ENCODE measurements at regions of chr5 and their contacts with region 1.

Region 1: GRCh38 chr5:102271759-102272158 is 24.3 kb downstream of the SLCO4C1 start:
- DNase-seq: no peak
- ATAC-seq: no peak
- H3K4me3 ChIP-seq: no peak overlapping the region
- H3K27ac ChIP-seq: no peak overlapping the region
- H3K4me1 ChIP-seq: no peaks in the 10 kb centered on the region
- H3K27me3 ChIP-seq: no peaks in the 10 kb centered on the region
- CTCF ChIP-seq: no peak
- POLR2A ChIP-seq: no peak

Region 2: GRCh38 chr5:102286476-102286875 is 14.7 kb after region 1 on chr5:
- in situ Hi-C with region 1: no loop called
- intact Hi-C with region 1: loop called (anchors 2 kb)
- DNase-seq: no peak
- ATAC-seq: no peak
- H3K4me3 ChIP-seq: no peak overlapping the region
- H3K27ac ChIP-seq: no peak overlapping the region
- H3K4me1 ChIP-seq: no peaks in the 10 kb centered on the region
- H3K27me3 ChIP-seq: no peaks in the 10 kb centered on the region
- CTCF ChIP-seq: no peak
- POLR2A ChIP-seq: no peak

Measured in gastrocnemius medialis (tissue), 4 donors.